ENCODE measurements at regions of chr12 and their contacts with region 1.

Region 1: DNA sequence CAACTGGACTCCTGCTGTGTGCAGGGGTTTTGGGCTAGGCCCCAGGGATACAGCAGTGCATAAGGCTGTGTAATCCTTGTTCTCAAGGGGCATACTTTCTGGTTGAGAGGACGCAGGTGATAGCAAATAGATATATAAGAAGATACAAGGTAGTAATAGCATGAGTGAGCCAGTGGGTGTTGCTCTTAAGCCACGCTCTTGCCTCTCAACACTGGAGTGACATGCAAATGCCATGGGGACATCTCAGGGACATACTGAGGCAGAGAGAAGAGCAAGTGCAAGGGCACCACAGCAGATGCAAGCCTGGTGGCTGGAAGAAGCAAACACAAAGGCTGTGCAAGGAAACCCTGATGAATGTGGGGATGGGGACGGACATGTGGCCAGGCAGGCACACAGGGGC is 223.3 kb downstream of the CHST11 start:
- DNase-seq: no peak
- H3K4me3 Mint-ChIP-seq: no peak overlapping the region
- H3K27ac Mint-ChIP-seq: peak overlapping the region; percentile 82
- H3K4me1 Mint-ChIP-seq: peaks cover 61% of the 10 kb centered on the region
- H3K27me3 Mint-ChIP-seq: no peaks in the 10 kb centered on the region

Region 2: DNA sequence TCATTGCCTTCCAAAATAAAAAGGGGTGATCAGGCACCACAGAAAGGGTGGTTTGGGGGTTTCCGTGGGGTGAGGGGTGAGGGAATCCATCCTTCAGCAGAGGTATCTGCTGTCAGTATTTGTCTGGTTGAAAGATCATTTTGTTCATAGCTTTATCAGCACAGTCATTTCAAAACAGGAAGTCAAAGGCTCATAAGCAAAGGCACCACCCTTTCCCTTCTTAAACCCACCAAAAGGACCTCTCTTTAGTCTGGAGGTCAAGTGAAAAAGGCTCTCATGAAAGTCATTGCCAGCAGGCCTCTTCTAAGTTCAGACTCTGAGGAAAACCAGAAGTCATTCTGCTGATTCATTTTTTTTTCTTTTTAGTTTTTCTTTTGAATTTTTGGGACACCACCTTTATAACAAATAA is 217.1 kb before region 1 on chr12:
- intact Hi-C with region 1: loop called (anchors 5 kb)
- DNase-seq: peak; percentile 58
- H3K4me3 Mint-ChIP-seq: peak overlapping the region; percentile 74
- H3K27ac Mint-ChIP-seq: peak overlapping the region; percentile 92
- H3K4me1 Mint-ChIP-seq: peaks cover 68% of the 10 kb centered on the region
- H3K27me3 Mint-ChIP-seq: no peaks in the 10 kb centered on the region

Region 3: GRCh38 chr12:104695453-104696148 is 15.5 kb after region 1 on chr12:
- intact Hi-C with region 1: loop called (anchors 1 kb)
- DNase-seq: peak; percentile 51
- H3K4me3 Mint-ChIP-seq: peak overlapping the region; percentile 34
- H3K27ac Mint-ChIP-seq: peak overlapping the region; percentile 89
- H3K4me1 Mint-ChIP-seq: peaks cover 73% of the 10 kb centered on the region
- H3K27me3 Mint-ChIP-seq: no peaks in the 10 kb centered on the region

Region 4: DNA sequence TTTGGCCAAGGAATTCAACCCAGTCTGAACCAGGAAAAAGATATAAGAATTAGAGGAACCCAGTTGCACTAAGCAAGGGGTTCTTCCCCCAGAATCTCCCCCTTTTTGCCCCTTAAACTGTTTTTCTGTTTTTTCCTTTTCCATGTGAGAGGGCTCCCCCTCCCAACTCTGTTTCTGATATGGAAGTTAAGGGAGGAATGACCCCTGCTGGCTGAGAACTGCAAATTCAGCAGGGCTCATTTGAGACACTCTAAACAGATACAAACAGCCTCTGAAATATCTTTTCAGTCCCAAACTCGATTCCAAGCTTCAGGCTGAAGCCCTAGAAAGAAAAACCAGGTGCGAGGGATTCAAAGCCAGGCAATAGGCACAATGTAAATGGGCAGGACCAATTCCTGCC is 145.3 kb after region 1 on chr12:
- intact Hi-C with region 1: loop called (anchors 5 kb)
- DNase-seq: no peak
- H3K4me3 Mint-ChIP-seq: no peak overlapping the region
- H3K27ac Mint-ChIP-seq: no peak overlapping the region
- H3K4me1 Mint-ChIP-seq: no peaks in the 10 kb centered on the region
- H3K27me3 Mint-ChIP-seq: no peaks in the 10 kb centered on the region

Region 5: GRCh38 chr12:105053116-105053572 is 373.1 kb after region 1 on chr12:
- intact Hi-C with region 1: loop called (anchors 10 kb)
- DNase-seq: peak; percentile 67
- H3K4me3 Mint-ChIP-seq: no peak overlapping the region
- H3K27ac Mint-ChIP-seq: no peak overlapping the region
- H3K4me1 Mint-ChIP-seq: peaks cover 6% of the 10 kb centered on the region
- H3K27me3 Mint-ChIP-seq: peaks cover 3% of the 10 kb centered on the region